ENCODE measurements at regions of chr2 and their contacts with region 1.

Region 1: DNA sequence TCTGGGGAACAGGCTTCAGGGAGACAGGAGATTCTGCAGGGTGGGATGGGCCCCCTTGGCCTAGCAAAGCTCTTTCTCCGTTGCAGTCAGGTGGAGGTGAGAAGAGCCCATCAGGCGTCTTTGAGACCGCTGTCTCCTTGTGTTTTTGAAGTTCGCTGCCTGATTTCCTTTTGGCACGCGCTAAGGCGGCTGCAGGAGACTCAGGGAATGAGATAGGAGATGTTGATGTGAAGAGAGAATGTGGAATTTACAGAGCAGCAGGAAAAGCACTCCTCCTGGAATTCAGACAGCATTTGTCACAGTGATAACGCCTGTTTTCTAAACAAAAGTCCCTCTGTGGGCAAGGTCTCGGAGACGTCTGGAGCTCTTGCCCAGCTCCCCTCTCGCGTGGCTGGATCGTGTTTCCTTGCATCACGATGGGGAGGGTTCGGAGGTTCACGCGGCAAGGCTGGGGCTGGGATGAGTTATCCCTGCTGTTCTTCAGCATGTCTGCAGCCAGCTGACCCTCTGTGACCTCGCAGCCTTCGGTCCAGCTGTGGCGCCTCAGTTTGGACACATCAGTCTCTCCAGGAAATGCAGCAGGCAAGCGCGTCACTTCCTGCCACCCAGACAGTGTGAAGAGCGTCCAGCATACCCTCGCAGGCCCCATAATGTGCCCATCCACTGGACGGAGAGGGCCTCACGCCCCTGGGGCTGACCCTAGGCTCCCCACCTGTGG is 30.2 kb downstream of the GLI2 start:
- DNase-seq: peak; percentile 99
- H3K4me3 ChIP-seq: peak overlapping the region; percentile 43
- H3K27ac ChIP-seq: peak overlapping the region; percentile 100
- H3K27me3 ChIP-seq: no peaks in the 10 kb centered on the region
- CTCF ChIP-seq: no peak

Region 2: DNA sequence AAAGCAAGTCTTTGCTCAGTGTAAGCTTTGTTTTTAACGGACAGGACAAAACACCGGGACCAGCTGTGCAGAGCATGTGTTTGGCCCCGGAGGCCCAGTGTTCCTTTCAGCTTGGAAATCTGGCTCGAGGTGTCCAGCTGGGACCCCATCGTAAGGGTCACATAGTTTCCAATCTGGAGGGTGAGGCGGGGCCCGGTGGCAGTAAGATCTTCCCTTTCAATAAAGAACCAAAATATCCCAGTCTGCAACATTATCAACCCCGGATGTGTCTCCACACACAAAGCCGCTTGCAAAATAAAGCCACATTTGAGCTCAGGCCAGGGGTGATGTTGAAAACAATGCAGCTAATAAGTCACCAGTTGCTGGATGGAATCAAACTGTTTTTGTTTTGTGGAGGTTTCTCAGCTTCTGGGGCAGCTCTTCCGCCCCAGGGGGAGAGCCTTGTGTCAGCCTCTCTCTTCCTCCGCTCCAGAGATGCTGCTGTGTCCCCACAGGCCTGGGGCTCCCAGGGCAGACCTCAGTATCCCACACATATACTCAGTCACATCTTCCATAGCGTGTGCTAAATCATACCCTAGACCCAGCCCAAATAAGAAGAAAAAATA is 168.7 kb before region 1 on chr2:
- CTCF ChIA-PET with region 1: no interaction called
- POLR2A ChIA-PET with region 1: no interaction called
- DNase-seq: peak; percentile 24
- H3K4me3 ChIP-seq: no peak overlapping the region
- H3K27ac ChIP-seq: peak overlapping the region; percentile 47
- H3K27me3 ChIP-seq: peaks cover 5% of the 10 kb centered on the region
- CTCF ChIP-seq: no peak

Region 3: GRCh38 chr2:120825370-120826259 is 59.8 kb after region 1 on chr2:
- CTCF ChIA-PET with region 1: no interaction called
- POLR2A ChIA-PET with region 1: interaction called, 14 read pairs
- DNase-seq: peak; percentile 78
- H3K4me3 ChIP-seq: peak overlapping the region; percentile 33; the same call in 1 of the 2 replicates
- H3K27ac ChIP-seq: peak overlapping the region; percentile 73
- H3K27me3 ChIP-seq: no peaks in the 10 kb centered on the region
- CTCF ChIP-seq: no peak

Region 4: DNA sequence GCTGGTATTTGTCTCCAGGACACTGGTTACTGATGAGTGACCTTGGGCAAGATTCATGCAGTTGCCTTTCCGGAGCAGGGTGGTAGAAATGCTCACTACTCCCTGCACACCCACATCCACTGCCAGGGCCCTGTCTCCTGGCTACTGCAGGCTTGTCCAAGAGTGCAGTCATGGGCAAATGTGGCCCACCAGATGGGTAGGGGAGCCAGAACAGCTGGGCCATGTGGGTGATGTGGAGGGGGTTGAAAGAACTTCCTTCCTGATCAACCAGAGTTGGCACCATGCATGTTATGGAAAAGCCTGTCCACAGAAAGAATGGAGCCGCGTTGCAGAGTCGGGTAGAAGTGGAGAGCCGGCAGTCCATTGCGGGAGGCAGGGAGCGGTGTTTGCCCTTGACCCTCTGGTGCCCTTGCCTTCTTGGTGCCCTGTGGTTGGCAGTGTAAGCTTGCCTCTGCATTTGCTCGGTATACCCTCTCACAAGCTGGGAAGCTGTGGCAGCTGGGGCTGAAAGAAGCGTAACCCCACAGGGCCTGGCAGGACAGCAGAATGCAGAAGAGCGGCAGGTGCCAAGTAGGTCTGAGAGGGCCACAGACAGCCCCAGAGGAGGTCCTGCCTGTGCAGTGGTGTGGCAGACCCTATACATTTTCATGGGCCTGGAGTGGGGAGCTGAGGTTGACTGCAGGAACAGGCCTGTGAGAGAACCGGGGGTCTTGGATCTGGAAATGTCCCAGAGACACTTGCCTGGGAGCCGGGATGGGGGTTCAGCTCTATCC is 265.9 kb after region 1 on chr2:
- CTCF ChIA-PET with region 1: no interaction called
- POLR2A ChIA-PET with region 1: no interaction called
- DNase-seq: no peak
- H3K4me3 ChIP-seq: no peak overlapping the region
- H3K27ac ChIP-seq: no peak overlapping the region
- H3K27me3 ChIP-seq: peaks cover 66% of the 10 kb centered on the region
- CTCF ChIP-seq: no peak

Measured in AG04450 (cell line).